Mammary epithelial cell (primary cell): ENCODE measurements at regions of chr3 and their contacts with region 1.

Region 1: DNA sequence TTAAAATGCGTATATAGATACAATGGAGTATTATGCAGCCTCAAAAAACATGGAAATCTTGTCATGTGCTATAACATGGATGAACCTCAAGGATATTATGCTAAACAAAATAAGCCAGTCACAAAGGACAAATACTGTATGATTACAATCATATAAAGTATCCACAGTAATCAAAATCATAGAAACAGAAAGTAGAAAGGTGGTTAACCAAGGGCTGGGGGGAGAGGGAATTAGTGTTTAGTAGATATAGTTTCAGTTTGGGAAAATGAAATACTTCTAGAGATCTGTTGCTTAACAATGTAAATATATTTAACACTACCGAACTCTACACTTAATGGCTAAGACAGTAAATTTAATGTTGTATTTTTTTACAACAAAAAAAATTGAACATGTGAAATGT is 9.0 kb downstream of the TOP2B start:
- DNase-seq: no peak
- H3K4me3 ChIP-seq: no peak overlapping the region
- H3K27ac ChIP-seq: no peak overlapping the region
- H3K4me1 ChIP-seq: no peaks in the 10 kb centered on the region
- H3K27me3 ChIP-seq: no peaks in the 10 kb centered on the region
- CTCF ChIP-seq: no peak

Region 2: DNA sequence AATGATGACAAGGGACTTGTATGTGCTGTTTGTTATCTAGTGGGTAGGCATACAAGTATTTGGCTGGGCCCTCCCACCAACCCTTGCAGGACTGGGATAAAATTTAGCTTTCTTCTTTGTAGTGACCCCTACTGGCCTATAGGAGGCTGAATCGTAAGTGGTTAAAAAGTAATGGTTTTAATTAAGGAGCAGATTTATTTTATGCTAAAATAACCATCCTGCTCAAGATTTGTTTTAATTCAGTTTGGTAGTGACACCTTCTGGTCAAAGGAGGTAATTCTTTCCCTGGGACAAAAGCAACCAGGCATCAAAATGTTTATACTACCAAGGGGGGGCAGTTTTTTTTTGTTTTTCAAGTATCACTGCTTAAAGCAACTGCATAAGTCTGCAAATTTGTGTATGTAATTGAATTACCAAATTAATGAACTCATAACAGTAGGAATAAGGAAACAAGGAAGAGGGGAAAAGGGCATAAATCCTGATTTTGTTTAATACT is 61.6 kb before region 1 on chr3:
- CTCF ChIA-PET with region 1: no interaction called
- dilution Hi-C with region 1: no loop called
- in situ Hi-C with region 1: no loop called
- intact Hi-C with region 1: no loop called
- DNase-seq: peak; percentile 58
- H3K4me3 ChIP-seq: no peak overlapping the region
- H3K27ac ChIP-seq: no peak overlapping the region
- H3K4me1 ChIP-seq: peaks cover 4% of the 10 kb centered on the region
- H3K27me3 ChIP-seq: no peaks in the 10 kb centered on the region
- CTCF ChIP-seq: peak; percentile 64 to 68

Region 3: GRCh38 chr3:25713335-25713985 is 57.8 kb after region 1 on chr3:
- CTCF ChIA-PET with region 1: no interaction called
- dilution Hi-C with region 1: no loop called
- in situ Hi-C with region 1: no loop called
- intact Hi-C with region 1: no loop called
- DNase-seq: peak; percentile 87
- H3K4me3 ChIP-seq: peak overlapping the region in 2 of 3 experiments; percentile 16 to 33
- H3K27ac ChIP-seq: peak overlapping the region; percentile 41
- H3K4me1 ChIP-seq: no peaks in the 10 kb centered on the region
- H3K27me3 ChIP-seq: no peaks in the 10 kb centered on the region
- CTCF ChIP-seq: no peak

Region 4: GRCh38 chr3:25856902-25857518 is 201.4 kb after region 1 on chr3:
- CTCF ChIA-PET with region 1: interaction called, 3 read pairs
- dilution Hi-C with region 1: no loop called
- in situ Hi-C with region 1: loop called (anchors 10 to 25 kb)
- intact Hi-C with region 1: loop called (anchors 5 kb)
- DNase-seq: peak; percentile 12
- H3K4me3 ChIP-seq: no peak overlapping the region
- H3K27ac ChIP-seq: no peak overlapping the region
- H3K4me1 ChIP-seq: peaks cover 4% of the 10 kb centered on the region
- H3K27me3 ChIP-seq: no peaks in the 10 kb centered on the region
- CTCF ChIP-seq: peak; percentile 65 to 83

Region 5: DNA sequence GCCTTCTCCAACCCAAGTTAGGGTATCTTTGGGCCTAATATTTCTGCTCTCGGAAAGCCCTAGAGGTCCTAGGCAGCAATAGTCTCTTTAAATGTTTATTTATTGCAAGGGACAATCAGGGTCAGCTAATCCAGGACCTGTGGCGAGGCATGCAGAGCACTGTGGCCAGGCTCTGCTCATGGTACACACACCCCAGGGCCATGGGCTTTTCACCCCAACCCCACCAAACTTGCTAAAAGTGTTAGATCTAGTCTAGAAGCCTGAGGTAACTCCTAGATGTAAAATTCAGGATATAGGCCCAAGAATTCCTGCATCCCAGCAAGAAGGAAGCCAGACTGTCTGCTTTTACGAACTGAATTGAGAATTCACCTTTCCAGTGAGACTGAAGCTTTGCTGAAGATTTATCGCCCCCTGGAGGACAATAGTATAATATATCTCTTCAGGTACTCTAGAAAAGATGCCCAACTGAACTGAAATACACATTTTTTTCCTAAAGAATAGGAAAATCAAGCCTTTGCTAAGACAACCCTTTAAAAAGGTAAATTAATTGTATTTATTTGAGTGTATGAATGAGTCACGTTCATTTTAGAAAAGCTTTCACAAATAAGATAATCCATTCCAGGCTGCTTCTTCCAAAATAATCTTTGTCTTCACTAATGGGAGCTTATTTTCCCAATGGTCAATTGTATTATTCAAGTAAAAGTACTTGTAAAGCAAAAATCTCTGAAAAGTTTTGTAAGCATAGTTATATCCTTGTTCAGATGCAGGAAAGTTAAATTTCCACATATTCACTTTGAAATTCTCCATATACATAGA is 1056.8 kb after region 1 on chr3:
- CTCF ChIA-PET with region 1: no interaction called
- dilution Hi-C with region 1: no loop called
- in situ Hi-C with region 1: no loop called
- intact Hi-C with region 1: loop called (anchors 10 kb)
- DNase-seq: peak; percentile 11
- H3K4me3 ChIP-seq: no peak overlapping the region
- H3K27ac ChIP-seq: no peak overlapping the region
- H3K4me1 ChIP-seq: no peaks in the 10 kb centered on the region
- H3K27me3 ChIP-seq: no peaks in the 10 kb centered on the region
- CTCF ChIP-seq: peak; percentile 51 to 65